A549 (cell line): ENCODE measurements at regions of chr2 and their contacts with region 1.

Region 1: DNA sequence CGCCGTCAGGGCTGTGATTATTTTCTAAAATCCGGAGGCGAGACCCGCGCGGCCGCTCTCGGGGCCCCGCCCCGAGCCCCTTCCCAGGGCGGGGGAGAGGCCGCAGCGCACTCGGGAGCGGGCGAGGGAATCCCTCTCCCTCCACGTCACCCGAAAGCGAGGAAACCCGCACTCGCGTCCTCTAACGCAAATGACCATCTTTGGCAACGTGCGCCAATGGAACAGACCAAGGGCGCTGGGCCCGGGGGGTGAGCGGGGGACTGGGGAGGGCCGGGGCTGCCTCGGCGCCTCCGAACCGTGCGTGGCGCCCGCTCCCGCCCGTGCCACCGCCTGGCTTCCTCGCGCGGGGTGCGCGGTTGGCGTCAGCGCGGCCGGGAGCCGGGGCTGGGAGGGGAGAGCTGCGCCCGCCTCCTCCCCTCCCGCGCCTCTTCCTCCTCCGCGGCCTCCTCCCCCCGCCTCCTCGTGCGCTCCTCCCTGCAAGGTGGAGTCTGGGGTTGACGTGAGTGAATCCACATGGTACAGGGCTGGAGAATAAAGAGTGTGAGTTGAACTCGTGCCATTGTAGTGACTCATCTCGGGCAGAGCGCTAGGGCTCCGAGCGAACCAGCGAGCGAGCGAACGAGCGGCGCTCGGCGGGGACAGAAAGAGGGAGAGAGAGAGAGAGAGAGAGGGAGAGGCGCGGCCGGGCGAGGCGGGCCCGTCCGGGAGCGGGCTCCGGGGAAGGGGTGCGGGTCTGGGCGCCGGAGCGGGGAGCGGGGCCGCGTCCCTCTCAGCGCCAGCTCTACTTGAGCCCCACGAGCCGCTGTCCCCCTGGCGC is at the start of gene FOSL2:
- DNase-seq: peak; percentile 98 to 100
- ATAC-seq: peak; percentile 49 to 76
- H3K4me3 ChIP-seq: peak within 1 kb of the TSS; percentile 78
- H3K27ac ChIP-seq: peak within 1 kb of the TSS; percentile 95
- H3K4me1 ChIP-seq: peaks cover 21% of the 10 kb centered on the region
- CTCF ChIP-seq: no peak; the same call in 2 of the 3 replicates
- EP300 ChIP-seq: peak; percentile 38 to 68; a peak in 2 of 5 replicates
- POLR2A ChIP-seq: peak; percentile 74
- RAD21 ChIP-seq: peak; percentile 46; a peak in 4 of 5 replicates
- polyA plus RNA-seq, gene FOSL2: 45.7 and 50.6 TPM in 2 replicates

Region 2: DNA sequence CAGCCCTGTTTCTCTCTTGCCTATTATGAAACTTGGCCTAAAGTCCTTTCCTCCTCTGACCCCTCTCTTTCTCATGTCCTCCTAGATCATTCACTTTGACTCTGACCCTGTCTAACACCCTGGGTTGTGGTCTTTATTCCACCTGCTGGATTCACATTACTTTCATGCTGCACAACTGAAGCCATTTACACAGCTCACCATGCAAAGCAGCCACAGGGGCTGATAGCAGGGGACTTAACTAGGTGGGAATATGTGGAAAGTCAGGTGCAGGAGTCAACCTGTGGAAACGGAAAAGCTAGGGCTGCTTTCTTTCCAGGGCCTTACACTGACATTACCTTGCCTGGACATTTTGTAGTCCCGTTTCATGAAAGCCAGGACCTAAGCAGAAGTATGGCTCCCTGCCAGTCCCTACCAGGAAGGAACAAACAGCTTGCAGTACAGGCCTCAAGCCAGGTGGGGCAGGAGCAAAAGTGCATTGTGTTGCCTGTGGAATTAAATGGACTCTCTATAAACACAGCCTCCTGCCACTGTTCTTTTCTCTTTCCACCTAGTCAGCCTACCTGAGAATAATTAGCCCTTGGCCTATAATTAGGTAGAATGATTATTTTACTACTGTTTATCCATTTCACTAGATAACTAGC is 1410.3 kb before region 1 on chr2:
- CTCF ChIA-PET with region 1: no interaction called
- POLR2A ChIA-PET with region 1: no interaction called
- DNase-seq: peak; percentile 74 to 79
- ATAC-seq: peak; percentile 95 to 99
- H3K4me3 ChIP-seq: no peak overlapping the region
- H3K27ac ChIP-seq: no peak overlapping the region
- H3K4me1 ChIP-seq: peaks cover 10% of the 10 kb centered on the region; the same call in 2 of the 3 replicates
- CTCF ChIP-seq: no peak
- EP300 ChIP-seq: no peak
- POLR2A ChIP-seq: no peak
- RAD21 ChIP-seq: no peak

Region 3: GRCh38 chr2:27754138-27754588 is 638.3 kb before region 1 on chr2:
- CTCF ChIA-PET with region 1: interaction called, 11 read pairs
- POLR2A ChIA-PET with region 1: interaction called, 8 read pairs
- DNase-seq: peak; percentile 53 to 85
- ATAC-seq: peak; percentile 97 to 99
- H3K4me3 ChIP-seq: no peak overlapping the region
- H3K27ac ChIP-seq: peak overlapping the region; percentile 74 to 82
- H3K4me1 ChIP-seq: peaks cover 26% of the 10 kb centered on the region
- CTCF ChIP-seq: peak; percentile 96
- EP300 ChIP-seq: no peak
- POLR2A ChIP-seq: no peak
- RAD21 ChIP-seq: peak; percentile 98 to 100

Region 4: DNA sequence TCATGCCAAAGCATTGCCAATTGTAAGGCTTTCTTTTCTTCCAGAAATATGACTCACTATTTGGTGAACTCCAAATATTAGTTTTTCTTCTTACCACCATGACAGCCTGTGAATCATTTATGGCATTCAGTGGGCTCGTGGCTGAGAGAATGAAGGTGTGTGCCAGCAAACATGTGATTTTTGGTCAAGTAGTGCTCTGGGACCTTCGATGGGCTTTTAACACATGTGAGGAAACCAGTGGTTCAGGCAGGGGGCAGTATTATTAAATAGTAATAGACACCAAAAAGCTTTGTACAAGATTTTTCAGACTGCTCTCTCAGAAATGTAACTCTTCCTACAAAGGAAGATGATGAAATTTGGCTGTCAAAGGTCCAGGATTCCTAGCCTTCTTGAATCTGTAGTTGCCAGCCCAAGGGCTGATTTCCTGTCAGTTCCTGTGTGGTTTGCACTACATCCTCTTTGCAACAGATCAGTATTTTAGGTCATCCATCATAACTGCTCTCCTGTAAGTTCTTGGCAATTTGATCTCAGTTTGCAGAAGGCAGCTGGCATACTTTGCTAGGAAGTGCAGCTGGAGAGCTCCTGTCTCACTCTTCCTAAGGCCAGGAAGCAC is 437.6 kb before region 1 on chr2:
- CTCF ChIA-PET with region 1: interaction called, 6 read pairs
- POLR2A ChIA-PET with region 1: interaction called, 21 read pairs
- DNase-seq: peak; percentile 60 to 96
- ATAC-seq: peak; percentile 90 to 95
- H3K4me3 ChIP-seq: no peak overlapping the region
- H3K27ac ChIP-seq: peak overlapping the region; percentile 80 to 93
- H3K4me1 ChIP-seq: peaks cover 68% of the 10 kb centered on the region
- CTCF ChIP-seq: peak; percentile 82
- EP300 ChIP-seq: peak; percentile 91 to 97; a peak in 3 of 5 replicates
- POLR2A ChIP-seq: no peak
- RAD21 ChIP-seq: peak; percentile 68 to 93

Region 5: GRCh38 chr2:28269019-28269784 is 123.3 kb before region 1 on chr2:
- CTCF ChIA-PET with region 1: interaction called, 3 read pairs
- POLR2A ChIA-PET with region 1: interaction called, 56 read pairs
- DNase-seq: peak; percentile 72 to 86
- ATAC-seq: peak; percentile 93 to 95
- H3K4me3 ChIP-seq: no peak overlapping the region
- H3K27ac ChIP-seq: peak overlapping the region; percentile 90 to 93
- H3K4me1 ChIP-seq: peaks cover 51% of the 10 kb centered on the region
- CTCF ChIP-seq: no peak
- EP300 ChIP-seq: no peak
- POLR2A ChIP-seq: no peak
- RAD21 ChIP-seq: peak; percentile 26 to 28; a peak in 3 of 5 replicates

Region 6: DNA sequence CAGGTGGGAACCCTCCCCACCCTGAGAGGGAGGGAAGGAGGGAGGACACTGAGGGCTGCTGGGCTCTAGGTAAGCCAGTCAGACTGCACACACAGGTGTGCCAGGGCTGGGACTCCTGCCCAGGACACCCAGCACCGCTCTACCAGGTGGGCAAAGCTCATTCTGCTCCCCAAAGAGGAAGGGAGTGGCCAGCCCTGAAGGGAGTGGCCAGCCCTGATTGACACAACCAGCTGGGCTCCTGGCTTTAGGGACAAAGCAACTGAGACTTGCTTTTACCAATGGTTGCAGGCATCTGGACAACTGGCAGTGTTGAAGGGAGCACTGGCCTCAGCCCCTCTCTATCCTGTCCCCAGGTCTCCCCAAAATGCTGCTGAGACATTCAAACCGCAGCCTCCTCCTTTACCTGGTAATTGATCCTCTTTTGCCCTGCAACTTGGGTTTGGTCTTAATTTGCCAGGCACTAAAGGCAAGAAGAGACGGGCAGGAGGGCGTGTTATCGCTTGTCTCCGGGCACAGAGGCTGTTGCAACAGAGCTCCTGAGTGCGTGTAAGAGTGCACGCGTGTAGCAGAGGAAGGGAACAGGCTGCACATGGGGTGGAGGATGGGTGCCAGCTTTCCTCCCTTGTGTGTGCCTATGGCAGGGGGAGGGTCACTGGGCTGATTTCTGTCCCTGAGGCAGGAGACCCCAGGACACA is 14.4 kb before region 1 on chr2:
- CTCF ChIA-PET with region 1: interaction called, 12 read pairs
- POLR2A ChIA-PET with region 1: interaction called, 5 read pairs
- DNase-seq: no peak
- ATAC-seq: peak in 1 of 2 experiments; percentile 15; a peak in 2 of 6 replicates
- H3K4me3 ChIP-seq: no peak overlapping the region
- H3K27ac ChIP-seq: peak overlapping the region; percentile 38 to 41; a peak in 4 of 6 replicates
- H3K4me1 ChIP-seq: peaks cover 17% of the 10 kb centered on the region; the same call in 2 of the 3 replicates
- CTCF ChIP-seq: no peak
- EP300 ChIP-seq: no peak
- POLR2A ChIP-seq: no peak
- RAD21 ChIP-seq: no peak